WTC11 (cell line): ENCODE measurements at regions of chr6 and their contacts with region 1.

Region 1: DNA sequence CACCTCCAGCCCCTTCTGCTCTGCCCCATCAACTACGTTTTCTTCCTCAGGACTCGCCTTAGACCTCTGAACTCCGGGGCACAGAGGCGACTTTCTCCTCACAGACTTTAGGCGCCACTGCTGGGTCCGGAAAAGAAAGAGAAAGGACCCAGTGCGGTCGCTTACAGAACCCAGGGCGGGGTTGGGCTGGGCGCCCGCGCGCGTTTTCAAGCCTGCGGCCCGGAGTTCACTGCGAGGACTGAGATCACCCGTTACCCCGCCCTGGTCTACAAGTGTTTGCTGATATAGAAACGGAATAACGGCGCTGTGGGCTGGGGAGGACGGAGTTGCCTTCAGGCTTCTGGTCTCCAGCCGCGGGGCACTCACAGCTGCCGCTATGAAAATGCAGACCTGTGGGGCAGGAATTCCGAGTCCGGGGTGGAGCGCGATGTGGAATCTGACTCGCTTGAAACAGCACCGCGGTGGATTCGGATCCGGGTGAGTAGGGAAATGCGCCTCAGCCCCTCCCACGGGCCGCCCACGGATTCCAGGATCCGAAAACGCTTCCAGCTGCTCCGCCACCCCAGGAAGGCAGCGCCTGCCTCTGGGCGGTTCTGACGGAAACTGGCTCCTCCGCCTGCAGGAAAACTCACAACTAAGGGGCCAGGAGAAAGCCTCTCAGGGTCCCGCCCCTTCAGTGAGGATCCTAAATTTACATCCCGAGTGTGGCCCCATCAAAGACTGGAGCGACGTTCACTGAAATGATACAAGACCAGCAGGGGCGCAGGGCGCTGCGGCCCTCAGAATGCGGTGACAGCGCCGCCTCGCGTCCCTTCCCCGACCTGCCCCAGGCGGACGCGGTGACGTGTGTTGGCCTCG is 29.4 kb downstream of the HLA-F start:
- DNase-seq: peak; percentile 92
- ATAC-seq: peak; percentile 66
- H3K4me3 Mint-ChIP-seq: peak overlapping the region; percentile 85
- H3K27ac Mint-ChIP-seq: peak overlapping the region; percentile 27; the same call in 1 of the 2 replicates
- H3K4me1 Mint-ChIP-seq: peaks cover 58% of the 10 kb centered on the region
- H3K27me3 Mint-ChIP-seq: peaks cover 54% of the 10 kb centered on the region
- CTCF ChIP-seq: peak; percentile 76

Region 2: DNA sequence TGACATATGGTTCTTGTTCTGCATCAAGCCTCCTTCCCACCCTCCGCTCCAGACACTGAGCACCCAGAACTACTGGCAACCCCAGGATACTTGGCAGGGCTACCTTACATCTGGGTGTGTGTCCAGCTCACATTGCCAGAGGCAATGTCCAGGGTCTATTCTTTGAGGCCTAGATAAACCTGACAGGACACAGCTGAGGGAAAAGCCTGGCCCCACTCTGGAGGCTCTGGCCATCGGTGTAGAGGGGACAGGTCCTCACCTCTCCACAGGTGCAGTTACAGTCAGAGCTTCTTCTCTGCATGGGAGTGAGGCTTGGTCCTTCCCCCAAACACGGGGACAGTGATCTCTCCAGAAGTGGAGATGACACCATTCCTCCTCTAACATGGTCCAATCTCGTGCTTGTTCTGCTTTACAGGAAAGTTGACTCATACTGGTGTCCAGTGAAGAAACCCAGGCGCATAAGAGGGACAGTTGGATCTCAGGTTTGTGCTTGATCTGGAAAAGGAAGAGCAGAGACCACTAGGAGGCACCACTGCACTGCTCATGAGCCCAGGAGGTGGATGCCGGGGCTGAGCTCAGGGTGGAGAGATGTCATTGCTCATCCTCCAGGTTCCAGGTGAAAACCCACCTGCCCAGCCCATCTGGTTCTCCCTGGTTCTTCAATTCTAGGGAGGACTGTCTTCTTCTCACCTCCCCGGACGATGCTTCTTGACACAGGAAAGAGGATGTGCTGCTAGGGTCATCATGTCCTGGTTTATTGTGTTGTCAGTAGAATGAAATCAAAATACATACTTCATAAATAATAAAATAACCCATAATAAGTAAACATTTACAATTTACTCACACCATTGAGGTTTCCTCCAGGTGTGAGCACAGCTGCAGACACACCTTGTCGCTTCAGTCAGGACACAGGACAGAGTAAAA is 14.7 kb before region 1 on chr6:
- CTCF ChIA-PET with region 1: interaction called, 38 read pairs
- POLR2A ChIA-PET with region 1: no interaction called
- DNase-seq: peak; percentile 81
- ATAC-seq: peak; percentile 97
- H3K4me3 Mint-ChIP-seq: no peak overlapping the region
- H3K27ac Mint-ChIP-seq: no peak overlapping the region
- H3K4me1 Mint-ChIP-seq: no peaks in the 10 kb centered on the region
- H3K27me3 Mint-ChIP-seq: peaks cover 18% of the 10 kb centered on the region
- CTCF ChIP-seq: peak; percentile 67

Region 3: DNA sequence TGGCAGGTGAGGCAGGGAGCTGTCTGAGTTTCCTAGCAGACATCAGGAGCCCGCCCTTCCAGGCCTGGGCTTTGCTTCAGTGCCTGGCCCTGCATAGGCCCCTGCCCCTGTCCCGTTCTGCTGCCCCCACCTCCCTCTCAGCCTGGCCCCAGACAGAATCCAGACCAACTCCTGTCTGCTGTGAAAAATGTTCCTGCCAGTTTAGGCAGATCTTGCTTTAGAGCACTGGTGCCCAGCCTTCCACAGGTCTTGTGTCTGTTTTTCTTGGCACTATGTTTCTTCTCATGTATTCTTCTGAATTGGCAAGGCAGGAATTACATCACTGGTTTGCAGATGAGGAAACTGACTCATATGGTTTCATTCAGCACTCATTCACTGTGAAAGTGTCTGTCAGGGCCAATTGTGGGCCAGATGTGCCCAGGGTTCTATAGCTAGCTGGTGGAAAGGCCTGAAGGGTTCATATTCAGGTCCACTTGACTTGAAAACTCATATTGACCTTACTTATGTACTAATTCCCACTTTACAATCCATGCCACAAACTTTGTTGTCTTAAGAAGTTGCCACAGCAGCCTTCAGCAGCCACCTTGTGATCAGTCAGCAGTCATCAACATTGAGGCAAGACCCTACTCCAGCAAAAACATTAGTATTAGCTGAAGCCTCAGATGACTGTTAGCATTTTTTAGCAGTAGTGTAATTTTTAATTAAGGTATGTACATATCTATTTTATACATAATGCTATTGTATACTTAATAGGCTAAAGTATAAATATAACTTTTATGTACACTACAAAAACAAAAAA is 11.0 kb after region 1 on chr6:
- CTCF ChIA-PET with region 1: interaction called, 14 read pairs
- POLR2A ChIA-PET with region 1: interaction called, 6 read pairs
- DNase-seq: no peak
- ATAC-seq: no peak
- H3K4me3 Mint-ChIP-seq: no peak overlapping the region
- H3K27ac Mint-ChIP-seq: no peak overlapping the region
- H3K4me1 Mint-ChIP-seq: peaks cover 27% of the 10 kb centered on the region
- H3K27me3 Mint-ChIP-seq: peaks cover 22% of the 10 kb centered on the region
- CTCF ChIP-seq: no peak

Region 4: GRCh38 chr6:29834564-29835436 is 82.1 kb after region 1 on chr6:
- CTCF ChIA-PET with region 1: interaction called, 21 read pairs
- POLR2A ChIA-PET with region 1: interaction called, 3 read pairs
- DNase-seq: peak; percentile 82
- ATAC-seq: peak; percentile 90
- H3K4me3 Mint-ChIP-seq: no peak overlapping the region
- H3K27ac Mint-ChIP-seq: no peak overlapping the region
- H3K4me1 Mint-ChIP-seq: no peaks in the 10 kb centered on the region; the same call in 1 of the 2 replicates
- H3K27me3 Mint-ChIP-seq: peaks cover 57% of the 10 kb centered on the region
- CTCF ChIP-seq: peak; percentile 98

Region 5: GRCh38 chr6:29992807-29993206 is 240.1 kb after region 1 on chr6:
- CTCF ChIA-PET with region 1: no interaction called
- POLR2A ChIA-PET with region 1: no interaction called
- DNase-seq: no peak
- ATAC-seq: no peak
- H3K4me3 Mint-ChIP-seq: no peak overlapping the region
- H3K27ac Mint-ChIP-seq: no peak overlapping the region
- H3K4me1 Mint-ChIP-seq: no peaks in the 10 kb centered on the region
- H3K27me3 Mint-ChIP-seq: peaks cover 23% of the 10 kb centered on the region
- CTCF ChIP-seq: no peak